T-cell (primary cell): ENCODE measurements at regions of chr3 and their contacts with region 1.

Region 1: GRCh38 chr3:132641837-132642538 is 17.6 kb downstream of the ACAD11 start:
- DNase-seq: peak in 1 of 35 experiments; percentile 57
- ATAC-seq: no peak
- H3K4me3 ChIP-seq: no peak overlapping the region
- H3K4me3 Mint-ChIP-seq: no peak overlapping the region
- H3K27ac ChIP-seq: no peak overlapping the region
- H3K27ac Mint-ChIP-seq: no peak overlapping the region
- H3K4me1 ChIP-seq: no peaks in the 10 kb centered on the region
- H3K4me1 Mint-ChIP-seq: peaks cover 0 to 3% (median 0%) of the 10 kb centered on the region in 3 donors
- H3K27me3 ChIP-seq: no peaks in the 10 kb centered on the region
- H3K27me3 Mint-ChIP-seq: no peaks in the 10 kb centered on the region

Region 2: GRCh38 chr3:132029182-132029902 is 612.6 kb before region 1 on chr3:
- CTCF ChIA-PET with region 1: no interaction called
- POLR2A ChIA-PET with region 1: no interaction called
- DNase-seq: peak in 28 of 35 experiments; percentile 1 to 57 (median 30)
- ATAC-seq: peak in 2 of 4 experiments; percentile 47 to 54
- H3K4me3 ChIP-seq: no peak overlapping the region
- H3K4me3 Mint-ChIP-seq: no peak overlapping the region
- H3K27ac ChIP-seq: no peak overlapping the region
- H3K27ac Mint-ChIP-seq: no peak overlapping the region
- H3K4me1 ChIP-seq: no peaks in the 10 kb centered on the region
- H3K4me1 Mint-ChIP-seq: peaks cover 3% of the 10 kb centered on the region in 3 donors
- H3K27me3 ChIP-seq: peaks cover 13 to 20% of the 10 kb centered on the region in 2 experiments
- H3K27me3 Mint-ChIP-seq: peaks cover 49 to 50% of the 10 kb centered on the region in 2 donors

Region 3: DNA sequence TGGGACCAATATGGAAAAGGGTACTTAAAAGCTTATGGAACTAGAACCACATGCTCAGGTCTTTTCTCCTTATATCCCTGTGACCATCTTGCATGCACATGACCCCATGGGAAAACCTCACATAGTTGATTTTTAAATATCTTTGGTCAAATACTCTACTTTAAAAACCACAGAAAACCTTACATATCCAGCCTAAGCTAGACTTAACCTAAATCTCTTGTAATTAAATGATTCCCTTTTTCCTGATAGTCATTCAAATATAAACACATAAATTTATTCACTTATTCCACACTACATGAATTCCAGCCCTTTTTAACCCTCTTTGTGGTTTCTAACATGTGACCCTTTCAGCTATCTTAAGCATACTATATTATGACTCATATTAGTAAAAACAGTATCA is 177.9 kb before region 1 on chr3:
- CTCF ChIA-PET with region 1: no interaction called
- POLR2A ChIA-PET with region 1: no interaction called
- DNase-seq: no peak
- ATAC-seq: no peak
- H3K4me3 ChIP-seq: no peak overlapping the region
- H3K4me3 Mint-ChIP-seq: no peak overlapping the region
- H3K27ac ChIP-seq: no peak overlapping the region
- H3K27ac Mint-ChIP-seq: no peak overlapping the region
- H3K4me1 ChIP-seq: no peaks in the 10 kb centered on the region
- H3K4me1 Mint-ChIP-seq: no peaks in the 10 kb centered on the region
- H3K27me3 ChIP-seq: no peaks in the 10 kb centered on the region
- H3K27me3 Mint-ChIP-seq: no peaks in the 10 kb centered on the region

Region 4: DNA sequence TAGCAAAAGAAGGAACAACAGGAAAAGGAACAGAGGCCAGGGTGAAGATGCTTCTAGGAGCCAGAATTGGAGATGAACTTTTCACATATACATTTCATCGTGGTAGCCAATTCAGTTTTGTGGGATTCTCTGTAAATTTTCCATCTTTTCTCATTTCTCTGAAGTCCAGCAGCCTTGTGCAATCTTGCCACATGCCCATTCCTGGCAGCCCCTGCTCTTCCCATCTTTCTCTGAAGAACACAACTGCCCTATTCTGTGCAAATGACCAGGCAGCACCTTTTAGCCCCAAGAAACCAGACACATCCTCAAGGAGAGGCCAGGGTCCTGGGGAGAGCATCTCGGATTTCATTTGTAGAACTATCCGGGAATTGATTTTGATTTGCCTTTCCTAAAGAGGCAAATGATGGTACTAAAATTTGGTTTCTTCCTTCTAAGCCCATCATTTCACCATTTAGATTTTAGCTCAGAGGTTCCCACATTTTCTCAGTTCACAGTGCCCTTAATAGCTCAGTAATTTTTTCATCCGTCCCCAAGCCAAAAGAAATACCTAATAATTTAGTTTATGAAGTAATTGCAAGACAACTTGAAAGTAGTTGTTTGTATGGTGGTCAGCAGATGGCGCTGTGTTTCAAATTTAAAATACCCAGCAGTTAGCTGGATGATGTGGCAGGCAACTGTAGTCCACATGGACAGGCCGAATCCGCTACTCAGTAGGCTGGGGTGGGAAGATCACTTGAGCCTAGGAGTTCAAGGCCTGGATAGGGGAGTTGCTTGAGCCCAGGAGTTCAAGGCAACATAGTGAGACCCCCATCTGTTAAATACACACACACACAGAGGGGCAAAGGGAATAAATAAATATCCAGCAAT is 106.2 kb before region 1 on chr3:
- CTCF ChIA-PET with region 1: interaction called, 33 to 39 read pairs
- POLR2A ChIA-PET with region 1: no interaction called
- DNase-seq: peak in 30 of 35 experiments; percentile 3 to 69 (median 31)
- ATAC-seq: peak in 1 of 4 experiments; percentile 51
- H3K4me3 ChIP-seq: no peak overlapping the region
- H3K4me3 Mint-ChIP-seq: no peak overlapping the region
- H3K27ac ChIP-seq: no peak overlapping the region
- H3K27ac Mint-ChIP-seq: no peak overlapping the region
- H3K4me1 ChIP-seq: no peaks in the 10 kb centered on the region
- H3K4me1 Mint-ChIP-seq: peaks cover 0 to 4% (median 0%) of the 10 kb centered on the region in 3 donors
- H3K27me3 ChIP-seq: no peaks in the 10 kb centered on the region
- H3K27me3 Mint-ChIP-seq: no peaks in the 10 kb centered on the region

Region 5: DNA sequence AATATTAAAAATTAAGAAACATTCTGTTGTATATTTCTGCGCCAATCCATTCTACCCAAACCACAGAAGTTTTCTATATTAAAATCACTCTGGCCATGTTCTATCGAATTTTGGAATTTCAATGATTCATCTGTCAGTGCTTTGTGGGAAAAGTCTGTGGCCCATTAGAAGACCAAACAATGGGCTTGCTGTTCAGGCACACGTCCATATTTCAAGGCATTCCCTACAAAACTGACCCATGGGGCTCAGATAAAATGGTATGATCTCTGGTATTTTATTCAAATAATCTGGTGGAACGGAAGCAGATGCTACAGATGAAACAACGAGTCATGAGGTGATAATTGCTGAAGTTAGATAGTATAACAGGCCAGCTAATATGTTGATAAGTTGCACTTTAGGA is 67.8 kb after region 1 on chr3:
- CTCF ChIA-PET with region 1: interaction called in 1 of 2 experiments, 12 read pairs
- POLR2A ChIA-PET with region 1: no interaction called
- DNase-seq: no peak
- ATAC-seq: no peak
- H3K4me3 ChIP-seq: no peak overlapping the region
- H3K4me3 Mint-ChIP-seq: no peak overlapping the region
- H3K27ac ChIP-seq: no peak overlapping the region
- H3K27ac Mint-ChIP-seq: no peak overlapping the region
- H3K4me1 ChIP-seq: no peaks in the 10 kb centered on the region
- H3K4me1 Mint-ChIP-seq: peaks cover 0 to 9% (median 6%) of the 10 kb centered on the region in 3 donors
- H3K27me3 ChIP-seq: no peaks in the 10 kb centered on the region
- H3K27me3 Mint-ChIP-seq: no peaks in the 10 kb centered on the region